Mammary epithelial cell (primary cell): ENCODE measurements at regions of chr12 and their contacts with region 1.

Region 1: DNA sequence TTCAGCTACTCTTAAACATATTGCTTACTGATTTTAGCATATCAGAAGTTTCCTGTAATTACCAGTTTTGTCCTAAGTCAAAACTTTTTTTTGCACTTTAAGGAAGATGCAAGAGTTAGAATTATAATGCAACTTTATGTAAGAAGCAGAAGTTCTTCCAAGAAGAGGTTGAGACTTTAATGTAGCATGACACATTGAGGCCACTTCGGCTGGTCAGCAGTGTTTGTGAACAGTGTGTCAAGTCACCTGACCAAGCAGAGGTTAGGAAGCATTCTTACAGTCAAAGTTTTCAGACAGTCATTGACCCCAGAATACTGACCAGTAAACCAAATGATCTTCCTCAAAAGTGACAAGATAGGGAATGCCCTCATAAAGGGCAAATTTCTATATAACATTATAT is 15.2 kb downstream of the FGFR1OP2 start:
- DNase-seq: no peak
- H3K4me3 ChIP-seq: no peak overlapping the region
- H3K27ac ChIP-seq: no peak overlapping the region
- H3K4me1 ChIP-seq: no peaks in the 10 kb centered on the region
- H3K27me3 ChIP-seq: no peaks in the 10 kb centered on the region
- CTCF ChIP-seq: no peak

Region 2: GRCh38 chr12:26810330-26810729 is 143.1 kb before region 1 on chr12:
- CTCF ChIA-PET with region 1: no interaction called
- dilution Hi-C with region 1: no loop called
- in situ Hi-C with region 1: no loop called
- intact Hi-C with region 1: no loop called
- DNase-seq: peak; percentile 53
- H3K4me3 ChIP-seq: peak overlapping the region in 2 of 3 experiments; percentile 9 to 19
- H3K27ac ChIP-seq: no peak overlapping the region
- H3K4me1 ChIP-seq: peaks cover 13% of the 10 kb centered on the region
- H3K27me3 ChIP-seq: no peaks in the 10 kb centered on the region
- CTCF ChIP-seq: no peak

Region 3: GRCh38 chr12:27861428-27862167 is 908.2 kb after region 1 on chr12:
- CTCF ChIA-PET with region 1: no interaction called
- dilution Hi-C with region 1: no loop called
- in situ Hi-C with region 1: no loop called
- intact Hi-C with region 1: loop called (anchors 10 kb)
- DNase-seq: peak; percentile 7
- H3K4me3 ChIP-seq: no peak overlapping the region
- H3K27ac ChIP-seq: no peak overlapping the region
- H3K4me1 ChIP-seq: peaks cover 11% of the 10 kb centered on the region
- H3K27me3 ChIP-seq: no peaks in the 10 kb centered on the region
- CTCF ChIP-seq: no peak